ENCODE measurements at regions of chrX and their contacts with region 1.

Region 1: GRCh38 chrX:130110379-130111219 is at the start of gene ELF4:
- DNase-seq: peak; percentile 77
- ATAC-seq: peak; percentile 68
- H3K4me3 Mint-ChIP-seq: peak within 1 kb of the TSS; percentile 92
- H3K27ac Mint-ChIP-seq: peak within 1 kb of the TSS; percentile 91
- H3K4me1 Mint-ChIP-seq: peaks cover 46% of the 10 kb centered on the region
- H3K27me3 Mint-ChIP-seq: no peaks in the 10 kb centered on the region
- total RNA-seq, gene ELF4: 23.9 to 27.5 TPM

Region 2: DNA sequence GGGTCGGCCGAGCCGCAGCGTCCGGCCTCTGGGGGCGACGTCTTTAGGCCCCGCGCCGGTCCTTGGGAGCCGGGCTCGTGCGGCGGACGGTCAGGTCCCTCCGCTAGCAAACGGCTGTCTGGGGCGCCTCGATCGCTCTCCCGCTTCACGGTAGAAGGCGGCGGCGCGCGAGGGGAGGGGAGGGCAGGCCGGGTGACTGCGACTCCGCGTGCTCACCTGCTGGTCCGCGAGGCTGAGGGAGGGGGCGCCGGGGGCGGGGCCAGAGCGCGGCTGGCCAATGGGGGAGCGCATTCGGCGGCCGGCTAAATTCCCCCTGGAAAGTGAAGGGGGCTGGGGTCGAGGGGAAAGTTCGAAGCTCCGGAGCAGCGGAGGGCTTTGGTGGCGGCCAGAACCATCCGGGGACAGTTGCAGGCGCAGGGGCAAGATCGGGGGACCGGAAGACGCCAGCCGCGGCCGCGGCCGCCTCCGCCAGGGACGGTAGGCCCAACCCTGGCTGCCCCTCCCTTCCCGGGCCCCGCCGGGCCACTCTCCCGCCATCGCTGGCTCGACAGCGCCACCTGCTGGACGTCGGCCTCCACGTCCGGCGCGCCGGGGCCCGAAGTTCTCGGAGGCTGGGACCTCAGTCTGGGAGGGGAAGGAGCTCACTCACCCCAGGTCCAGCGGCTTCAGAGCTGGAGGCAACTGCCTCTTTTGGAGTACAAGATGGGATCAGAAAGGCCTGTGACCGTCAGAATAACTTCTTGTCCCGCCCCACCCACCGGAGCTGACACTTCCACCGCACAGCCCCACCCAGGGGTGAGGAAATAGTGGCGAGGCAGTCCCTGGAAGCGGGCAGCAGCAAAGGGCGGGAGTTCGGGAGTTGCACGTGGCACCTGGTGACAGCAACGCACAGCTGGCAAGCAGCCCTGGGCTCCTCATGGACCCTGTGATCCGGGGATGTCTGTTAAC is 50.2 kb before region 1 on chrX:
- CTCF ChIA-PET with region 1: no interaction called
- POLR2A ChIA-PET with region 1: no interaction called
- intact Hi-C with region 1: no loop called
- DNase-seq: peak; percentile 90
- ATAC-seq: peak; percentile 91
- H3K4me3 Mint-ChIP-seq: peak overlapping the region; percentile 65
- H3K27ac Mint-ChIP-seq: peak overlapping the region; percentile 55
- H3K4me1 Mint-ChIP-seq: peaks cover 4% of the 10 kb centered on the region
- H3K27me3 Mint-ChIP-seq: no peaks in the 10 kb centered on the region

Region 3: GRCh38 chrX:130091958-130092522 is 18.6 kb before region 1 on chrX:
- CTCF ChIA-PET with region 1: interaction called, 4 read pairs
- POLR2A ChIA-PET with region 1: no interaction called
- intact Hi-C with region 1: loop called (anchors 1 to 2 kb)
- DNase-seq: peak; percentile 93
- ATAC-seq: peak; percentile 98
- H3K4me3 Mint-ChIP-seq: peak overlapping the region; percentile 78
- H3K27ac Mint-ChIP-seq: peak overlapping the region; percentile 97
- H3K4me1 Mint-ChIP-seq: peaks cover 63% of the 10 kb centered on the region
- H3K27me3 Mint-ChIP-seq: no peaks in the 10 kb centered on the region

Region 4: GRCh38 chrX:130120746-130121504 is 10.3 kb after region 1 on chrX:
- CTCF ChIA-PET with region 1: interaction called, 5 read pairs
- POLR2A ChIA-PET with region 1: no interaction called
- intact Hi-C with region 1: loop called in 1 of 2 experiments (anchors 1 kb)
- DNase-seq: peak; percentile 81
- ATAC-seq: peak; percentile 88
- H3K4me3 Mint-ChIP-seq: peak overlapping the region; percentile 57
- H3K27ac Mint-ChIP-seq: peak overlapping the region; percentile 60
- H3K4me1 Mint-ChIP-seq: peaks cover 19% of the 10 kb centered on the region
- H3K27me3 Mint-ChIP-seq: no peaks in the 10 kb centered on the region

Region 5: GRCh38 chrX:130173190-130173895 is 62.7 kb after region 1 on chrX:
- CTCF ChIA-PET with region 1: no interaction called
- POLR2A ChIA-PET with region 1: no interaction called
- intact Hi-C with region 1: loop called in 1 of 2 experiments (anchors 2 kb)
- DNase-seq: peak; percentile 68
- ATAC-seq: peak; percentile 59
- H3K4me3 Mint-ChIP-seq: peak overlapping the region; percentile 88
- H3K27ac Mint-ChIP-seq: peak overlapping the region; percentile 92
- H3K4me1 Mint-ChIP-seq: peaks cover 48% of the 10 kb centered on the region
- H3K27me3 Mint-ChIP-seq: no peaks in the 10 kb centered on the region

Region 6: DNA sequence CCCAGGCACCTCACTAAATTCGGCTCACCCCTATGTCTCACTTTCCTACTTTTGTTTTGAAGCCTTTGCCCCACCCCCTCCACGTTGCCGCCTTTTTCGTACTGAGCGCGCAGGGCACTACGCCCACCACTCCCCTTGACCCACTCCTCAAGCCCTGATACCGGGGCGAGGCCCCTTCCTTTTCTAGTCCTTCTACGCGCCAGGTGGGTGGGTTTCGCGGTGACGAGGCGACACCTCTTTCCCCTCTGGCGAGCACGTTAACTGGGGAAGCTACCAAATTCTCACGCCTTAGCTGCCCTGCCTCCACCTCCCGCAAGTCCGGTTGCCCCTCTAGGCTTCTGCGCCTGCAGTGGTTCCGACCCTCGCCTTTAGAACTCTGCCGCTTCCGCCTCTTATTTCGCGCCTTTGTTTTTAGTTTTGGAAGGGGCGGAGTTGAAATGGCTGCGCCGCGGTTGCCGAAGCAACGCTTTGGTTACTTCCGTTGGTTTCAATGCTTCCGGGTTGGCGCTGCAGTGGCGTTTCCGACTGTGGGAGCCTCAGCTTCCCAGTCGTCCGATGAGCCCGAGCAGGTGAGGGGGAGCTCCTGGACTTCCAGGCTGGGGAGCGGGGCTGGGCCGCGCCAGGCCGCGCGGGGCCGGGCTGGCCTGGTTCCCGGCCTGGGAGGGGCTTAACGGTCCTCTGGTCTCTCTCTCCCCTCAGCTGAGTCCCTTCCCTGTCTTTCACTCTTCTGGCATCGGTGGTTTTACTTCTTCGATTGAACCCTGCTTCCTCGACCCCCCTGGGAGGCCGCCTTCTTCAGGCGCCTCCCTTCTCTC is 229.0 kb after region 1 on chrX and contains the start of gene SLC25A14:
- CTCF ChIA-PET with region 1: no interaction called
- POLR2A ChIA-PET with region 1: interaction called, 15 read pairs
- intact Hi-C with region 1: no loop called
- DNase-seq: peak; percentile 82
- ATAC-seq: peak; percentile 88
- H3K4me3 Mint-ChIP-seq: peak within 1 kb of the TSS; percentile 87
- H3K27ac Mint-ChIP-seq: peak within 1 kb of the TSS; percentile 94
- H3K4me1 Mint-ChIP-seq: peaks cover 14% of the 10 kb centered on the region
- H3K27me3 Mint-ChIP-seq: no peaks in the 10 kb centered on the region
- total RNA-seq, gene SLC25A14: 9.6 to 11.0 TPM